BJ (cell line): ENCODE measurements at regions of chr22 and their contacts with region 1.

Region 1: GRCh38 chr22:44625981-44626687 is 75.9 kb upstream of the PRR5 start:
- DNase-seq: no peak
- H3K4me3 ChIP-seq: no peak overlapping the region
- H3K27me3 ChIP-seq: 0 out of 2 replicates have a peak, but pooled peaks cover 1% of the 10 kb centered on the region
- CTCF ChIP-seq: peak; percentile 86

Region 2: GRCh38 chr22:43998679-43999264 is 627.4 kb before region 1 on chr22:
- CTCF ChIA-PET with region 1: interaction called, 150 read pairs
- POLR2A ChIA-PET with region 1: no interaction called
- DNase-seq: no peak
- H3K4me3 ChIP-seq: no peak overlapping the region
- H3K27me3 ChIP-seq: no peaks in the 10 kb centered on the region
- CTCF ChIP-seq: no peak